ENCODE measurements at regions of chr16 and their contacts with region 1.

Region 1: DNA sequence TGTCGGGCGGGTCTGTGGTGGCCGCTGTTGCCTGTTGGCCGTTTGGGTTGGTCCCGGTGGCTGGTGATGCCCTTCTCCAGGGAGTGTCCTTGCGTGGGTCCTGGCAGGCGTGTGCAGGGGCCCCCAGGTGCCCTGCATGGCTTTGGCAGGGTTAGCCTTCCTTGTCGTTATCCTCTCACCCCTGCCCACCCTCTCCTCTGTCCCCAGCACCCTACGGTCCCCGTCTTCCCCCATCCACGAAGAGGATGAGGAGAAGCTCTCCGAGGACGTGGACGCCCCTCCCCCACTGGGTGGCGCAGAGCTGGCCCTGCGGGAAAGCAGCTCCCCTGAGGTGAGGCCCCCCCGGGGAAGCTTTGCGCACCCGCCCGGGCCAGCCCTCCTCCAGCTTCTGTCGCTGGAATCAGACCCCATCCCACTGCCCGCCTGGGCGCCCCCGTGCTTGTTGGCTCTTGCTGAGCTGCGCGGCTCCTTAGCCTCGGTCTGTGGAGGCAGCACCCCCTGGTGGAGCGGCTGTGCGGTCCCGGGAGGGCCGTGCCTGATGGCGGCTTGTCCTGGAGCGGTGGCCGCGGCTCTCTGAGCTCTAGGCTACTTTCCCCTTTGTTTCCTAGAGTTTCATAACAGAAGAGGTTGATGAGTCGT is 10.6 kb upstream of the NUDT16L1 start:
- H3K4me3 Mint-ChIP-seq: peak overlapping the region; percentile 45
- H3K27ac Mint-ChIP-seq: peak overlapping the region; percentile 64
- H3K4me1 Mint-ChIP-seq: peaks cover 66% of the 10 kb centered on the region
- H3K27me3 Mint-ChIP-seq: no peaks in the 10 kb centered on the region

Region 2: GRCh38 chr16:4624015-4624826 is 58.5 kb before region 1 on chr16 and contains the start of gene MGRN1:
- intact Hi-C with region 1: loop called (anchors 1 kb)
- H3K4me3 Mint-ChIP-seq: peak within 1 kb of the TSS; percentile 98
- H3K27ac Mint-ChIP-seq: peak within 1 kb of the TSS; percentile 97
- H3K4me1 Mint-ChIP-seq: peaks cover 56% of the 10 kb centered on the region
- H3K27me3 Mint-ChIP-seq: no peaks in the 10 kb centered on the region

Region 3: GRCh38 chr16:4828567-4829321 is 146.0 kb after region 1 on chr16:
- intact Hi-C with region 1: no loop called
- H3K4me3 Mint-ChIP-seq: no peak overlapping the region
- H3K27ac Mint-ChIP-seq: no peak overlapping the region
- H3K4me1 Mint-ChIP-seq: no peaks in the 10 kb centered on the region
- H3K27me3 Mint-ChIP-seq: no peaks in the 10 kb centered on the region

Measured in dendritic cell treated with granulocyte-macrophage colony-stimulating factor and Interleukin-4, amounts not matched to agents 40 ng/mL and 50 ng/mL, for 4 days (primary cell).